Naive thymus-derived CD4-positive, alpha-beta T cell (primary cell): ENCODE measurements at regions of chr7 and their contacts with region 1.

Region 1: GRCh38 chr7:108497082-108497725 is 28.7 kb downstream of the PNPLA8 start:
- DNase-seq: peak in 8 of 9 donors; percentile 21 to 59 (median 55)
- ATAC-seq: peak; percentile 88
- H3K4me3 ChIP-seq: no peak overlapping the region
- H3K4me3 Mint-ChIP-seq: no peak overlapping the region
- H3K27ac ChIP-seq: no peak overlapping the region
- H3K27ac Mint-ChIP-seq: peak overlapping the region in 2 of 9 donors; percentile 6 to 43
- H3K4me1 ChIP-seq: no peaks in the 10 kb centered on the region
- H3K4me1 Mint-ChIP-seq: peaks cover 0 to 5% (median 0%) of the 10 kb centered on the region in 7 donors
- H3K27me3 ChIP-seq: no peaks in the 10 kb centered on the region
- H3K27me3 Mint-ChIP-seq: no peaks in the 10 kb centered on the region

Region 2: DNA sequence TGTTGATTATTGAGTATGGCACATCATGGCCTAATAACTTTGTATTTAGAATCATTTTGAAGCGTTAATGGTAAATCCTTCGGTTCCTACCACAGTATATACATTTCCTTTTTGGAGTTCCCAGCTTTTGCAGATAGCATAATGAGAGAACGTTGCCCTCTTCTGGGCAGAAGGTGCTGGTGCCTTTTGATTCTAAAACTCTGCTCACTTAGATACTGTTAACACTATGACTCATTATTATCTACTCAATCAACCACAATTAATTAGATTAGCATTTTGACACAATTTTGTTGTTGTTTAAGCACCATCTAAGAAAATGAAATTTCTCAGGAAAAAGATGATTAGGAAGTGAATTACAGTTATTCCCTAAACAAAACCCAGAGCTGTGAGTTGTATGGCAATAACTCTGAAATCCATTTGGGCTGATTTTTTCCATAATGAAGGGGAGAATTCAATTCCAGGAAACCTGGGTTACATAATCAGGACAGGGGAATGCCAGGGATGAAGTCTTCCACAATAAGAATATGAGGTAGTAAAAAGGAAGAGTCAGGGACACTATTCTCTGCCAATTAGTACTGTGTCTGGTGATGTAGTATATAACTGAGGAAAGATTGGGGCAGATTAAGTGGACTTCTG is 617.7 kb before region 1 on chr7:
- CTCF ChIA-PET with region 1: no interaction called
- POLR2A ChIA-PET with region 1: no interaction called
- intact Hi-C with region 1: no loop called
- DNase-seq: peak in 5 of 9 donors; percentile 30 to 50 (median 42)
- ATAC-seq: peak; percentile 85
- H3K4me3 ChIP-seq: no peak overlapping the region
- H3K4me3 Mint-ChIP-seq: no peak overlapping the region
- H3K27ac ChIP-seq: no peak overlapping the region
- H3K27ac Mint-ChIP-seq: peak overlapping the region in 1 of 9 donors; percentile 53
- H3K4me1 ChIP-seq: peaks cover 3 to 11% of the 10 kb centered on the region in 2 donors
- H3K4me1 Mint-ChIP-seq: peaks cover 5 to 34% (median 24%) of the 10 kb centered on the region in 7 donors
- H3K27me3 ChIP-seq: peaks cover 0 to 4% of the 10 kb centered on the region in 2 donors
- H3K27me3 Mint-ChIP-seq: peaks cover 0 to 23% (median 9%) of the 10 kb centered on the region in 5 donors

Region 3: GRCh38 chr7:107972075-107972482 is 525.1 kb before region 1 on chr7:
- CTCF ChIA-PET with region 1: no interaction called
- POLR2A ChIA-PET with region 1: no interaction called
- intact Hi-C with region 1: no loop called
- DNase-seq: no peak
- ATAC-seq: no peak
- H3K4me3 ChIP-seq: no peak overlapping the region
- H3K4me3 Mint-ChIP-seq: no peak overlapping the region
- H3K27ac ChIP-seq: no peak overlapping the region
- H3K27ac Mint-ChIP-seq: no peak overlapping the region
- H3K4me1 ChIP-seq: no peaks in the 10 kb centered on the region
- H3K4me1 Mint-ChIP-seq: no peaks in the 10 kb centered on the region
- H3K27me3 ChIP-seq: no peaks in the 10 kb centered on the region
- H3K27me3 Mint-ChIP-seq: peaks cover 0 to 16% (median 4%) of the 10 kb centered on the region in 5 donors

Region 4: GRCh38 chr7:108452722-108453121 is 44.5 kb before region 1 on chr7:
- CTCF ChIA-PET with region 1: interaction called, 67 read pairs
- POLR2A ChIA-PET with region 1: interaction called, 6 read pairs
- intact Hi-C with region 1: loop called (anchors 1 kb)
- DNase-seq: peak in 6 of 9 donors; percentile 24 to 58 (median 41)
- ATAC-seq: peak; percentile 69
- H3K4me3 ChIP-seq: no peak overlapping the region
- H3K4me3 Mint-ChIP-seq: peak overlapping the region in 5 of 10 donors; percentile 7 to 64 (median 47)
- H3K27ac ChIP-seq: no peak overlapping the region
- H3K27ac Mint-ChIP-seq: no peak overlapping the region
- H3K4me1 ChIP-seq: no peaks in the 10 kb centered on the region
- H3K4me1 Mint-ChIP-seq: peaks cover 5 to 30% (median 22%) of the 10 kb centered on the region in 7 donors
- H3K27me3 ChIP-seq: no peaks in the 10 kb centered on the region
- H3K27me3 Mint-ChIP-seq: peaks cover 17 to 69% (median 50%) of the 10 kb centered on the region in 5 donors

Region 5: GRCh38 chr7:108477696-108478095 is 19.5 kb before region 1 on chr7:
- CTCF ChIA-PET with region 1: interaction called, 3 read pairs
- POLR2A ChIA-PET with region 1: no interaction called
- intact Hi-C with region 1: loop called in 1 of 2 experiments (anchors 2 kb)
- DNase-seq: no peak
- ATAC-seq: no peak
- H3K4me3 ChIP-seq: no peak overlapping the region
- H3K4me3 Mint-ChIP-seq: no peak overlapping the region
- H3K27ac ChIP-seq: no peak overlapping the region
- H3K27ac Mint-ChIP-seq: peak overlapping the region in 1 of 9 donors; percentile 5
- H3K4me1 ChIP-seq: no peaks in the 10 kb centered on the region
- H3K4me1 Mint-ChIP-seq: peaks cover 0 to 2% (median 0%) of the 10 kb centered on the region in 7 donors
- H3K27me3 ChIP-seq: no peaks in the 10 kb centered on the region
- H3K27me3 Mint-ChIP-seq: no peaks in the 10 kb centered on the region